Panc1 (cell line): ENCODE measurements at regions of chr15 and their contacts with region 1.

Region 1: GRCh38 chr15:57146506-57147201 is 228.2 kb downstream of the TCF12 start:
- DNase-seq: no peak
- ATAC-seq: no peak
- H3K4me3 ChIP-seq: no peak overlapping the region
- H3K27ac ChIP-seq: no peak overlapping the region
- H3K4me1 ChIP-seq: no peaks in the 10 kb centered on the region
- H3K27me3 ChIP-seq: no peaks in the 10 kb centered on the region
- CTCF ChIP-seq: peak; percentile 65; the same call in 1 of the 2 replicates

Region 2: GRCh38 chr15:56929399-56929798 is 217.3 kb before region 1 on chr15:
- CTCF ChIA-PET with region 1: no interaction called
- POLR2A ChIA-PET with region 1: no interaction called
- in situ Hi-C with region 1: no loop called
- intact Hi-C with region 1: no loop called
- DNase-seq: no peak
- ATAC-seq: no peak
- H3K4me3 ChIP-seq: no peak overlapping the region
- H3K27ac ChIP-seq: no peak overlapping the region
- H3K4me1 ChIP-seq: peaks cover 13% of the 10 kb centered on the region
- H3K27me3 ChIP-seq: no peaks in the 10 kb centered on the region
- CTCF ChIP-seq: no peak

Region 3: DNA sequence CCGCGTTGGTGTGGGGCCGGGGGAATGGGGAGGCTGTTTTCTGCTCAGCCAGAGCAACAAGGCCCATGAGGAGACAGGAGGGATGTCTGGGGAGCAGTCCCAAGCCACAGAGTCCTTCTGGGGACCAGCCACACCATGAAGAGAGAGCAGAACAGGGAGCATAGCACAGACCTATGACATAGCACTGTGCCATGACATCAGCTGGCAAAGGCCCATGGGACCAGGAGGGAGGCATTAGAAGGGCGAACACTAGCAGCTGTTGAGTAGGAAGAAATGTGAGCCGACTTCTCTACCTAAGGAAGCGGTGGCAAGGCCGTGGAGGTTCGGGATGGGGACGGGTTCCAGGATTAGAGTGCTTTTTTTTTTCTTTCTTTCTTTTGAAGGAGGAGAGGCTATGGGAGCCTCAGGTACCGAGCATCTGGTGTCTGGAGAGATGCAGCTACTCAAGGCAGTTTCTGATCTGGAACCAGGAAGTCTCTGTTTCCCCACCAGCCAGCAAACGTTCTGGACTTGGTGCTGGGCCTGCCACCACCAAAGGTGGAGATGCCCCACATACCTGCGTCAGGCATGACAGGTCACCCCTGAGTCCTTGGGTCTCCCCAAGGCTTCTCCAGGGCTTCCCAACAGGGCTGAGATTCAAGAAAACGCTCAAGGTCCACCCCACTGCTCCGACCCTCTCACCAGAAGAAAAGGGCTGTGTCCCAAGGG is 152.3 kb after region 1 on chr15:
- CTCF ChIA-PET with region 1: no interaction called
- POLR2A ChIA-PET with region 1: no interaction called
- in situ Hi-C with region 1: no loop called
- intact Hi-C with region 1: loop called (anchors 10 kb)
- DNase-seq: no peak
- ATAC-seq: no peak
- H3K4me3 ChIP-seq: no peak overlapping the region
- H3K27ac ChIP-seq: no peak overlapping the region
- H3K4me1 ChIP-seq: no peaks in the 10 kb centered on the region
- H3K27me3 ChIP-seq: no peaks in the 10 kb centered on the region
- CTCF ChIP-seq: no peak